ENCODE measurements at regions of chr22 and their contacts with region 1.

Region 1: DNA sequence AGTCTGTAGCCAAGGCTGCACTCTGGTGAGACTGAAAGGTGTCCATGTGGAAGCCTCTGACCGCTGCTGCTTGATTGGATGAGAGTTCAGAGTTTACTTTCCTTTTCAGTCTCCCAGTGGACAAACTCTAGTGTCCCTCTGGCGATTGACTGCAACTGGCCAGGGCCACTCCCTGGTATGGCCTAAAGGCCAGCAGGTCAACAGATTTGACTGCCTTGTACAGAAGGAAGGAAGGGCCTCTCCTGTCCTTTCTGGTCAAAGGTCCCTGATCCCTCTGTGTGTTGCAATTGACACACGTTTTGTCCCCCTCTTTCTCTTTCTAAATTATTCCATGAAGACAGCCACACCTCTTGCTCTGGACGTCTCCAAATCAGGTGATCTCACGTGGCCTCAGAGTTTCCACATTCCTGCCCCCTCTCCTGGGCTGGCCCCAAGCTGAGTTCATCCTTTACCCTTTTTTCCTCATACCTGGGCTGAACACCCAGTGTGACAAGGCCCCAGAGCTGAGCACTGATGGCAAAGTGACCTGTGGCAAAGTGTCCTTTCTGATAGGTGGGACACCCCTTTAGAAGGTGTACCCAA is 18.7 kb upstream of the FBLN1 start:
- DNase-seq: peak; percentile 93 to 94
- H3K4me3 ChIP-seq: no peak overlapping the region
- H3K4me3 Mint-ChIP-seq: peak overlapping the region; percentile 50
- H3K27ac Mint-ChIP-seq: peak overlapping the region; percentile 88
- H3K4me1 ChIP-seq: peaks cover 40% of the 10 kb centered on the region
- H3K4me1 Mint-ChIP-seq: peaks cover 12% of the 10 kb centered on the region
- H3K27me3 ChIP-seq: no peaks in the 10 kb centered on the region
- H3K27me3 Mint-ChIP-seq: no peaks in the 10 kb centered on the region
- CTCF ChIP-seq: no peak

Region 2: DNA sequence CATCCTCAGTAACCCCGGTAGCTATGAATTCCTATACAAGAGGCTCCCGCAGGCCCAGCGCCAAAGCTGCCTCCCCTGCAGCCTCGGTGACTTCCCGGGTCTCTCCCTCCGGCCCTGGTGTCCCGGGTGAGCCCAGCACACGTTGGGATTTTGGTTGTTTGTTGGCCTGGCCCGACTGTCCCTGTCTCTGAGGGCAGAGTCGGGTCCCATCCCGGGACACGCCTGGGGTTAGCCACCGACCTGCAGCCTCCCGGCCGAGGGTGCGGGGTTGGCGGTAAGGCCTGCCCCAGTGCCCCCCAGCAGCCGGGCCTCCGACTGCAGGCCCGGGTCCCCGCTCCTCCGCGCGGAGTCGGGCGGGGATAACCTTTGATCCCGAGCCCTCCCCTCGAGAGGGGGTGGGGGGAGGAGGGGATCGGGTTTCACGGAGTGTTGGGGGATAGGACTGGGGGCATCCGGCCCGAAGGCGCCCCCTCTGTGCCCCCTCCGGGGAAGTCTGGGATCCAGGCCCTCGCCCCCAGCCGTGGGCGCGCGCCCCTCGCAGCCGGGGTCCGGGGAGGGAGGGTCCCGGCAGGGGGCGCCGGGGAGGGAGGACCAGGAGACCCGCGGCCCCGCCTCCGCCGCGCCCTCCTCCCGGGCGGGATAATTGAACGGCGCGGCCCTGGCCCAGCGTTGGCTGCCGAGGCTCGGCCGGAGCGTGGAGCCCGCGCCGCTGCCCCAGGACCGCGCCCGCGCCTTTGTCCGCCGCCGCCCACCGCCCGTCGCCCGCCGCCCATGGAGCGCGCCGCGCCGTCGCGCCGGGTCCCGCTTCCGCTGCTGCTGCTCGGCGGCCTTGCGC is 18.4 kb after region 1 on chr22 and contains the start of gene FBLN1:
- CTCF ChIA-PET with region 1: no interaction called
- POLR2A ChIA-PET with region 1: interaction called, 10 read pairs
- intact Hi-C with region 1: loop called (anchors 1 kb)
- DNase-seq: peak; percentile 78 to 89
- H3K4me3 ChIP-seq: peak within 1 kb of the TSS; percentile 90
- H3K4me3 Mint-ChIP-seq: peak within 1 kb of the TSS; percentile 93
- H3K27ac Mint-ChIP-seq: peak within 1 kb of the TSS; percentile 90
- H3K4me1 ChIP-seq: peaks cover 44% of the 10 kb centered on the region
- H3K4me1 Mint-ChIP-seq: peaks cover 19% of the 10 kb centered on the region
- H3K27me3 ChIP-seq: no peaks in the 10 kb centered on the region
- H3K27me3 Mint-ChIP-seq: no peaks in the 10 kb centered on the region
- CTCF ChIP-seq: peak; percentile 53 to 61
- total RNA-seq, gene FBLN1: 510 and 519 TPM in 2 replicates